Left ventricle myocardium inferior (tissue), 1 donor: ENCODE measurements at regions of chr15 and their contacts with region 1.

Region 1: GRCh38 chr15:50675536-50676144 is 11.0 kb downstream of the TRPM7 start:
- DNase-seq: no peak
- H3K4me3 ChIP-seq: no peak overlapping the region
- H3K27ac ChIP-seq: no peak overlapping the region
- H3K4me1 ChIP-seq: peaks cover 80% of the 10 kb centered on the region
- H3K27me3 ChIP-seq: no peaks in the 10 kb centered on the region
- CTCF ChIP-seq: peak; percentile 82

Region 2: DNA sequence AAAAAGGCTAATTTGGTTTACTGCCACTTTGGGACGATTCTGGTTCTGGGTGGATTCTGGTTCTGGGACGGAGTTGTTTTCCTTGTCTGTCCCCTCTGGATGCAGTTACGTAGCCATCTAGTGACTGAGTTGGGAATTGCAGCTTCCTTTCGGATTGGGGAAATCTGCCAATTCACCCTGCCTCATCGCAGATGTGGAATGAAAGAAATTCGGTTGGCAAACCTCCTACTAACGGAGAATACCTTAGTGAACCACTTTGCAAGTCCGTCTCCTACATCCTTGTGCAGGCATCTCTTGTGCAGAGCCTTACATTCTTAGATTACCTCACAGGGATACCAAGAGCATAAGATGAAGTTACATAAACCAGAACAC is 201.3 kb after region 1 on chr15:
- intact Hi-C with region 1: loop called (anchors 5 kb)
- DNase-seq: peak; percentile 22
- H3K4me3 ChIP-seq: peak overlapping the region; percentile 61
- H3K27ac ChIP-seq: no peak overlapping the region
- H3K4me1 ChIP-seq: peaks cover 5% of the 10 kb centered on the region
- H3K27me3 ChIP-seq: no peaks in the 10 kb centered on the region
- CTCF ChIP-seq: peak; percentile 98